Posterior vena cava (tissue), 2 donors: ENCODE measurements at regions of chr18 and their contacts with region 1.

Region 1: GRCh38 chr18:607930-608329 is 11.1 kb downstream of the CLUL1 start:
- DNase-seq: no peak

Region 2: DNA sequence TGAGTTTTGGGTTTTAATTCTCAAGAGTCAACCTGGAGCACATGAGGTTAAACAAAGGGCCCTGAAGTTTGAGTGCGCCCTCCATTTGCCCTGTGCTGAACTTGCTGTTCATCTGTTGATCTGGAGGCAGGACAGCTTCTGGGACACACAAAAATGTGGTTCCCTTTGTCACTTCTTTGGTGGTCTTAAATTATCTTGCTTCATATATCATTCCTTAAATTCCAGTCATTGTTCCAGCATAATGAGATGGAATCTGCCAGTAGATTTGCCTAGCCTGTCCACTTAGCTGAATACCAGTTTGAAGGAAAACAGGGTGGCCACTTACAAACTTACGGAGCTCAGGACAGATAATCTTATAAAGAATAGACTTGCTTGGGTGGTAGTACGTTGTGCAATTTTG is 26.8 kb before region 1 on chr18:
- intact Hi-C with region 1: loop called in 1 of 2 experiments (anchors 1 kb)
- DNase-seq: no peak

Region 3: GRCh38 chr18:750456-750855 is 142.5 kb after region 1 on chr18:
- intact Hi-C with region 1: no loop called
- DNase-seq: no peak